Panc1 (cell line): ENCODE measurements at regions of chr4 and their contacts with region 1.

Region 1: DNA sequence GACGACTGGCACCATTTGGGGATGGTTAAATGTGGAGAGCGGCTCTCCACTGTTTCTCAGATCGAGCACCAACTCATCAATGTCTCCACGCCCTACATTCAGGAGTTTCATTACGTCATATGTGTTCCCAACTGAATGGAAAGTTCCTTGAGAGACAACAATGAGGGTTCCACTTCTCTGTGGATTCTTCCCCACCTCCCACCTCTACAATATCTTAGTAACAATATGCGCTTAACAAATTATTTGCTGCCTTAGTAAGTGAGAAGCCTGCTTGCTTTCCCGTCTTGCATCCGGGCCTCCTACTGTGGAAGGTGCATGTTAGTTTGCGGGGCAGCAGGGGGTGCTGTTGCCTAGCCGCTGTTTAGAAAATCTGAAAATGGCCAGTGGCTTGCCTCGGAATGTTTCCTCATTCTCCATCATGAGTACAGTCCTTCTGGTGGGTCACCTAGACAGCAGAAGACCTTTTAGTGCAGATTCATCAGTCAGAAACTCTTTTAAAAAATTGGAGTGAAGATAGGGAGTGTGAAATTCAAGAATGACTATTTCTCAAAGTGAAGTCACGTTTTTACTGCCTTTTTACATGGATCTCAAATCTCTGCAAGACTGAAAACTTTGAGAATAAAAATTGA is 55.7 kb downstream of the PHOX2B start:
- DNase-seq: peak; percentile 43
- ATAC-seq: peak; percentile 86
- H3K4me3 ChIP-seq: peak overlapping the region; percentile 11 to 42; a peak in 3 of 4 replicates
- H3K27ac ChIP-seq: no peak overlapping the region
- H3K4me1 ChIP-seq: no peaks in the 10 kb centered on the region
- H3K27me3 ChIP-seq: peaks cover 3% of the 10 kb centered on the region
- CTCF ChIP-seq: peak; percentile 88

Region 2: DNA sequence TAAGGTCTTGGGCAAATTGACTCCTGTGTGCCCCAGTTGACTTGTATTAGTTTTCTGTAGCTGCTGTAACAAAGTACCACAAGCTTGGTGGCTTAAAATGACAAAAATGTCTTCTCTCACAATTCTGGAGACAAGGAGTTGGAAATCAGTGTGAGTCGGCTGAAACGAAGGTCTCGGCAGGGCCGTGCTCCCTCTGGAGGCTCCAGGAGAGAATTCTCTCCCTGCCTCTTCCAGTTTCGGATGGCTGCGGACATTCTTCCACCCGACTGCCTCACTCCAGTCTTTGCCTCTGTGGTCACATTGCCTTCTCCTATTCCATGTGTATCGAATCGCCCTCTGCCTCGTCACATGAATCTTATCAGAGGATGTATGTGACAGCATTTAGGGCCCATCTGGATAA is 121.7 kb after region 1 on chr4:
- CTCF ChIA-PET with region 1: no interaction called
- POLR2A ChIA-PET with region 1: no interaction called
- in situ Hi-C with region 1: no loop called
- intact Hi-C with region 1: loop called (anchors 5 kb)
- DNase-seq: no peak
- ATAC-seq: no peak
- H3K4me3 ChIP-seq: no peak overlapping the region
- H3K27ac ChIP-seq: no peak overlapping the region
- H3K4me1 ChIP-seq: no peaks in the 10 kb centered on the region
- H3K27me3 ChIP-seq: no peaks in the 10 kb centered on the region
- CTCF ChIP-seq: peak; percentile 41

Region 3: DNA sequence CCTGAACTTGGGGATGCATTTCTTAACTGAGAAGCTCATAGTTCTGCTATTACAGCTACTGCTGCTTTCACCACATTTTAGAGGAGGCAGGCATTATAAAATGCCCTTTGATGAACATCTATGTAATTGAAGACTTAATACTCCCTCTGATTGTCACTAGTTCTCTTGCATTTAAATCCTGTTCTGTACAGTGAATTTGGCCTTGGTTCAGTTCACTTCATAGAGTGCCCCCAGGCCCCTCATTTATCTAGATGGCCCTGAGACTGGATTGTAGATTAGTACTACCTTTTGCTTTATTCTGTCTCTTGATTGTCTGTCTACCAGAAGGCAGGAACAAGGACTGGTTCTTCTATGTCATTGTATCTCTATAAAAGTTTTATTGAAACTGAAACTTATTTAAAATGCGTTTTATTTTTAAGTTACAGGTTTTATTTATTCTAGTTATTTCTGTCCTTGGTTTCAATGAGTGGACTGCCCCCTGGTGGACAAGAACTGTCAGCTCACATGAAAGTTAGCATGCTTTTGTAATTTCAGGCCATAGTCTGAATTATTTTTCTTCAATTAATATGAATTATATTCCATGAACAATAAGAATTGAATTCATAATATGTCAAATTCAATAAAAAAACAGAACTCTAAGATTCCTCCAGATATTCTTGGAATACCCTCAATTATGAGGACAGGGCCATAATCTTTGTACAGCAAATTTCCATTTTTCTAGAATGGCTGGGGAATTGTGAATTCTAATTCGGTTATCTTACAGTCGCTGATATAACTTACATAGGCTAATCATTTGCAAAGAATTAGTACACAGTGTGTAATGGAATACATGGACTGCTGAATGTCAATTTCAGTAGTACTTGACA is 195.2 kb after region 1 on chr4:
- CTCF ChIA-PET with region 1: no interaction called
- POLR2A ChIA-PET with region 1: no interaction called
- in situ Hi-C with region 1: no loop called
- intact Hi-C with region 1: loop called (anchors 1 kb)
- DNase-seq: no peak
- ATAC-seq: no peak
- H3K4me3 ChIP-seq: no peak overlapping the region
- H3K27ac ChIP-seq: no peak overlapping the region
- H3K4me1 ChIP-seq: no peaks in the 10 kb centered on the region
- H3K27me3 ChIP-seq: peaks cover 2% of the 10 kb centered on the region
- CTCF ChIP-seq: peak; percentile 72; the same call in 1 of the 2 replicates